ENCODE measurements at regions of chr18 and their contacts with region 1.

Region 1: GRCh38 chr18:59402432-59403090 is 43.5 kb upstream of the LMAN1 start:
- DNase-seq: peak; percentile 9 to 75 (median 52)
- ATAC-seq: peak; percentile 82 to 92 (median 85)
- H3K4me3 ChIP-seq: no peak overlapping the region
- H3K4me3 Mint-ChIP-seq: no peak overlapping the region
- H3K27ac ChIP-seq: no peak overlapping the region
- H3K27ac Mint-ChIP-seq: no peak overlapping the region
- H3K4me1 ChIP-seq: no peaks in the 10 kb centered on the region
- H3K4me1 Mint-ChIP-seq: peaks cover 0 to 6% (median 4%) of the 10 kb centered on the region in 3 donors
- H3K27me3 ChIP-seq: no peaks in the 10 kb centered on the region
- H3K27me3 Mint-ChIP-seq: peaks cover 4 to 6% of the 10 kb centered on the region in 2 donors

Region 2: DNA sequence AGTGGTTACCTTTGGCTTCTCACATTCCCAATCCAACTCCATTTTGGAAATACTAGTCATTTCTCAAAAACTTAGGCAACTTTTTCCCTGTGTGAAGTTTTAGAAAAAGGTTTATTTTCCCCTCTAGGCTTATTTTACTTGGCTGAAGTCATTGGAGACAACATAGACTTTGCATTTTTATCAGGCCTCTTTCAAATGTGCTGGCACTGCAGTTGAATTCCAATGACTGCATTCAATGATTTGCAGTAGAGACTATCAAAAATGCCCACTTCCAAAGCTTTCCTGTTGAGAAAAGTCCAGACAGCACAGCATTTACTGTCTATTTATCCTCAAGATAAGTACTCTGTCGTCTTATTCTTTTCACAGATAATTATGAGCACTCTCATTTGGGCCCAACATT is 1897.3 kb before region 1 on chr18:
- CTCF ChIA-PET with region 1: interaction called in 1 of 2 experiments, 11 read pairs
- POLR2A ChIA-PET with region 1: no interaction called
- DNase-seq: no peak
- ATAC-seq: no peak
- H3K4me3 ChIP-seq: no peak overlapping the region
- H3K4me3 Mint-ChIP-seq: no peak overlapping the region
- H3K27ac ChIP-seq: no peak overlapping the region
- H3K27ac Mint-ChIP-seq: no peak overlapping the region
- H3K4me1 ChIP-seq: no peaks in the 10 kb centered on the region
- H3K4me1 Mint-ChIP-seq: no peaks in the 10 kb centered on the region
- H3K27me3 ChIP-seq: peaks cover 0 to 5% of the 10 kb centered on the region in 2 experiments
- H3K27me3 Mint-ChIP-seq: peaks cover 31% of the 10 kb centered on the region in 2 donors

Region 3: DNA sequence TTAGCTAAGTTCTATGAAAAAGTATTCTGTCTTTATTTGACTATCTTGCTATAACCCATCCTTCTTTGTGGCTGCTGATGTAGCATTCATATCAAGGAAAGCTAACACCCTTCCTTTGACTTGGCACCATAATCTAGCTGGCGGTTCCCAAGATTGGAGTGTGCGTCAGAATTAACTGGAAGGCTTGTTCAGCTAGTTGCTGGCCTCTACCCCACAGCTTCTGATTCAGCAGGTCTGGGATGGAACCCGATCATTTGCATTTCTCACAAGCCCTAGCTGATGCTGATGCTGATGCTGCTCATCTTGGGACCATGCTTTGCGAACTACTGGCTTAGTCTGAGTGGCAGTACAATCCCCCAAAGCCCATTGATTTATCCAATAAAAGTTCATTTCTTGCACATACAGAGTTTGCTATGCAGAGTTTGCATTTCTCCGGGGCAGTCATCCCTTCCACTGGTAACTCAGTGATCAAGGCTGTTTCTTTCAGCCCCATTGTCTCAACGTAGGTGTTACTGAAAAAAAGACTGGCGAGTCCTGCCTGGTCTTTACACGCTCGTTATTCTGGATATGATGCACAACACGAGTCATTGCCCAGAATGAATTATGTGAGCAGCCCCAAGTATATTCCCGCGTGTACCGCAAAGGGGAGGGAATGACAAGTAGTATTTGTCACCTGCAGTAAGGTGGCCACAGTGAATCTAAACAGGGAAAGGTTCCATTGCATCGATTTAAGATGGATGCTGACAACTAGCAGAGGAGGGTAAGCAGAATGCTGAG is 441.4 kb before region 1 on chr18:
- CTCF ChIA-PET with region 1: no interaction called
- POLR2A ChIA-PET with region 1: no interaction called
- DNase-seq: no peak
- ATAC-seq: no peak
- H3K4me3 ChIP-seq: no peak overlapping the region
- H3K4me3 Mint-ChIP-seq: no peak overlapping the region
- H3K27ac ChIP-seq: no peak overlapping the region
- H3K27ac Mint-ChIP-seq: no peak overlapping the region
- H3K4me1 ChIP-seq: no peaks in the 10 kb centered on the region
- H3K4me1 Mint-ChIP-seq: peaks cover 0 to 2% (median 0%) of the 10 kb centered on the region in 3 donors
- H3K27me3 ChIP-seq: peaks cover 0 to 3% of the 10 kb centered on the region in 2 experiments
- H3K27me3 Mint-ChIP-seq: peaks cover 2 to 27% of the 10 kb centered on the region in 2 donors

Region 4: DNA sequence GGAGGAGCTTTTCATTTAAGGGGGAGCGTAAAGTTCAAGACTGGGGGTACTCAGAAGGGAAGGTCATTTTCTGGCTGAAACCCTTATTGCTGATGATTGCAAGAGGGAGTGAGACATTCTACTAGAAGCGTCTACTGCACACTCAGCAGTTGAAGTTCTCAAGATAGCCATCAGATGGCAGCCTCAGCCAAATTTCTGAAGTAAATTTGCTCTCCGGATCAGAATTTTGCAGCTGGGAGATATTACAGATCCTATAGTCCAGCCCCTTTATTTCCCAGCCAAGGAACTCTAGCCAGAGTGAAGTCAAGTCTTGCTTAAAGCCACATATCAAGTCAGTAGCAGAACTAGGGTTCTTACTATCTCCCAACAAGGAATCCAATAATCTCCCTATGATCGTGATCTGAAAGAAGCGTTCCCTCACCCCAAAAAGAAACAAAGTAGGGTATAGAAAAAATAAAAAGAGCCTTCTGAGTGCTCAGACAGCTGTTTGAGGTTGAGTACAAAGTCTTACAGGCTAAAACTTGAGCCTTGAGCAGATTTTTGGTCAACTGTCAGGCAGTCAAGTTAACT is 153.3 kb before region 1 on chr18:
- CTCF ChIA-PET with region 1: interaction called, 16 to 29 read pairs
- POLR2A ChIA-PET with region 1: no interaction called
- DNase-seq: peak in 7 of 35 experiments; percentile 3 to 48 (median 9)
- ATAC-seq: no peak
- H3K4me3 ChIP-seq: no peak overlapping the region
- H3K4me3 Mint-ChIP-seq: no peak overlapping the region
- H3K27ac ChIP-seq: no peak overlapping the region
- H3K27ac Mint-ChIP-seq: no peak overlapping the region
- H3K4me1 ChIP-seq: no peaks in the 10 kb centered on the region
- H3K4me1 Mint-ChIP-seq: no peaks in the 10 kb centered on the region
- H3K27me3 ChIP-seq: peaks cover 10% of the 10 kb centered on the region in 2 experiments
- H3K27me3 Mint-ChIP-seq: peaks cover 55% of the 10 kb centered on the region in 2 donors

Region 5: DNA sequence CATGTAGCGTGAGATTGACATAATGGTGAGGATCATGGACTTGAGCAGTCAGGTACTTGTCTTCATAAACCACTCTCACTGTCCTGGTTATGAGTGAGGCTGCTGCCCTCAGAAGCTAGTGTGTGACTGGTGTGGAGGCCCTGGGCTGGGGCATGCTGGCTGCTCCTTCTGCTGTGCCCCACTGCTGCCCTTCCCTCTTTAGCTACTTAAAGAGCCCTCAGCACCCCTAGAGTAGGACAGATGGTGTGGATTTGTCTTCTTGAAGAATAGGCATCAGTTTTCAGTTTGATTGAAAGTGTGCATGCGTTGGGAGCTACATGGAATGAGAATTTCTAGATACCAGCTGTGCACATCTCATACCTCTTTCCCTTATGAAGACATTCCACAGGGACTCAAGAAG is 99.6 kb before region 1 on chr18:
- CTCF ChIA-PET with region 1: interaction called, 51 to 57 read pairs
- POLR2A ChIA-PET with region 1: no interaction called
- DNase-seq: no peak
- ATAC-seq: no peak
- H3K4me3 ChIP-seq: no peak overlapping the region
- H3K4me3 Mint-ChIP-seq: no peak overlapping the region
- H3K27ac ChIP-seq: no peak overlapping the region
- H3K27ac Mint-ChIP-seq: no peak overlapping the region
- H3K4me1 ChIP-seq: no peaks in the 10 kb centered on the region
- H3K4me1 Mint-ChIP-seq: no peaks in the 10 kb centered on the region
- H3K27me3 ChIP-seq: peaks cover 0 to 24% of the 10 kb centered on the region in 2 experiments
- H3K27me3 Mint-ChIP-seq: peaks cover 23 to 27% of the 10 kb centered on the region in 2 donors

Region 6: DNA sequence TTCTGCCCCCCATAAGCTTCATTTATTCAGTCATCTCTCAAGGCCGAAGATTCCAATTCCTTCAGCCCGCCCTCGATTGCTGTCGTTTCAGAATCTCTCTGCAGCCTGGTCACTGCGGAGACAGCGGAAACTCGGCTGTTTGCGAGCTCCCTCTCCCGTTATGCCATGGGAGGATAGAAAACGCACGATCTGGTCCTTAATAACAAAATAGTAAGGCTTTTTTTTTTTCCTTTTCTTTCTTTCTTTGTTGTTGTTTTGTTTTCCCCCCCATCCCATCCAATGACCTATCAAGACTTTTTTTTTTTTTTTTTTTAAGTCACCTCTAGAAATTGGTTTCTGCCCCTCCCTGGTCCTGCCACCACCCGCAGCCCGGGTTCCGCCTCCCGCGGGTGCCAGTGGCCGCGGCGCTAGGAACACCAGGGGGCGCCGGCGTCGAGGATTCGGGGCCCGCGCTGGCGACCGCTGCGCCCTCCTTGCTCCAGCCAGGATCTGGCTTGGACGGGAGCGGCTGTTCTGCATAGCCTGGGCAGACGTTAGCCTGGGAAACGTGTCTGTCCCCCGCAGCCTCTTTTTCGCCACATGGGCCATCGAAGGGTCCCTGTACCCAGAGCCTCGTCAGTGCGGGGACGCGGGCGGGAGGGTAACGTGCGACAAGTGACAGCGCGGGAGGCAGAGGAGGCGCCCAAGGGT is 94.2 kb before region 1 on chr18:
- CTCF ChIA-PET with region 1: interaction called, 51 to 57 read pairs
- POLR2A ChIA-PET with region 1: no interaction called
- DNase-seq: peak; percentile 1 to 73 (median 45)
- ATAC-seq: peak; percentile 83 to 91 (median 86)
- H3K4me3 ChIP-seq: peak overlapping the region; percentile 27 to 45
- H3K4me3 Mint-ChIP-seq: peak overlapping the region; percentile 44 to 49 (median 48)
- H3K27ac ChIP-seq: no peak overlapping the region
- H3K27ac Mint-ChIP-seq: no peak overlapping the region
- H3K4me1 ChIP-seq: peaks cover 0 to 9% of the 10 kb centered on the region in 2 experiments
- H3K4me1 Mint-ChIP-seq: peaks cover 0 to 3% (median 2%) of the 10 kb centered on the region in 3 donors
- H3K27me3 ChIP-seq: peaks cover 2 to 26% of the 10 kb centered on the region in 2 experiments
- H3K27me3 Mint-ChIP-seq: peaks cover 35 to 54% of the 10 kb centered on the region in 2 donors

Region 7: GRCh38 chr18:59432803-59433597 is 30.4 kb after region 1 on chr18:
- CTCF ChIA-PET with region 1: no interaction called
- POLR2A ChIA-PET with region 1: no interaction called
- DNase-seq: no peak
- ATAC-seq: no peak
- H3K4me3 ChIP-seq: no peak overlapping the region
- H3K4me3 Mint-ChIP-seq: no peak overlapping the region
- H3K27ac ChIP-seq: no peak overlapping the region
- H3K27ac Mint-ChIP-seq: no peak overlapping the region
- H3K4me1 ChIP-seq: no peaks in the 10 kb centered on the region
- H3K4me1 Mint-ChIP-seq: no peaks in the 10 kb centered on the region
- H3K27me3 ChIP-seq: peaks cover 0 to 10% of the 10 kb centered on the region in 2 experiments
- H3K27me3 Mint-ChIP-seq: peaks cover 7 to 19% of the 10 kb centered on the region in 2 donors

Region 8: GRCh38 chr18:59566533-59566971 is 164.0 kb after region 1 on chr18:
- CTCF ChIA-PET with region 1: no interaction called
- POLR2A ChIA-PET with region 1: no interaction called
- DNase-seq: no peak
- ATAC-seq: no peak
- H3K4me3 ChIP-seq: no peak overlapping the region
- H3K4me3 Mint-ChIP-seq: no peak overlapping the region
- H3K27ac ChIP-seq: no peak overlapping the region
- H3K27ac Mint-ChIP-seq: no peak overlapping the region
- H3K4me1 ChIP-seq: no peaks in the 10 kb centered on the region
- H3K4me1 Mint-ChIP-seq: no peaks in the 10 kb centered on the region
- H3K27me3 ChIP-seq: peaks cover 0 to 3% of the 10 kb centered on the region in 2 experiments
- H3K27me3 Mint-ChIP-seq: peaks cover 6 to 7% of the 10 kb centered on the region in 2 donors

Measured in T-cell (primary cell).